ENCODE measurements at regions of chr7 and their contacts with region 1.

Region 1: GRCh38 chr7:100101016-100101862 is at the starts of genes AP4M1 and MCM7:
- DNase-seq: peak; percentile 99
- ATAC-seq: peak; percentile 88
- H3K4me3 Mint-ChIP-seq: peak within 1 kb of the TSS; percentile 90
- H3K27ac Mint-ChIP-seq: peak within 1 kb of the TSS; percentile 93
- H3K4me1 Mint-ChIP-seq: peaks cover 43% of the 10 kb centered on the region
- H3K27me3 Mint-ChIP-seq: no peaks in the 10 kb centered on the region
- total RNA-seq, gene AP4M1: 9.9 to 10.6 TPM
- total RNA-seq, gene MCM7: 405 to 409 TPM

Region 2: GRCh38 chr7:100081535-100082102 is 19.6 kb before region 1 on chr7 and contains the start of gene ZNF3:
- CTCF ChIA-PET with region 1: interaction called, 14 read pairs
- DNase-seq: peak; percentile 99
- ATAC-seq: peak; percentile 91
- H3K4me3 Mint-ChIP-seq: peak within 1 kb of the TSS; percentile 88
- H3K27ac Mint-ChIP-seq: peak within 1 kb of the TSS; percentile 87
- H3K4me1 Mint-ChIP-seq: peaks cover 32% of the 10 kb centered on the region
- H3K27me3 Mint-ChIP-seq: no peaks in the 10 kb centered on the region
- total RNA-seq, gene ZNF3: 21.2 to 24.1 TPM

Region 3: GRCh38 chr7:100088621-100089457 is 12.4 kb before region 1 on chr7 and contains the start of gene COPS6:
- CTCF ChIA-PET with region 1: interaction called, 18 read pairs
- DNase-seq: peak; percentile 85
- ATAC-seq: peak; percentile 78
- H3K4me3 Mint-ChIP-seq: peak within 1 kb of the TSS; percentile 86
- H3K27ac Mint-ChIP-seq: peak within 1 kb of the TSS; percentile 88
- H3K4me1 Mint-ChIP-seq: peaks cover 47% of the 10 kb centered on the region
- H3K27me3 Mint-ChIP-seq: no peaks in the 10 kb centered on the region
- total RNA-seq, gene COPS6: 81.2 to 90.8 TPM

Region 4: GRCh38 chr7:100126931-100127865 is 26.0 kb after region 1 on chr7 and contains the start of gene MBLAC1:
- CTCF ChIA-PET with region 1: interaction called, 60 read pairs
- DNase-seq: peak; percentile 94
- ATAC-seq: peak; percentile 79
- H3K4me3 Mint-ChIP-seq: peak within 1 kb of the TSS; percentile 89
- H3K27ac Mint-ChIP-seq: peak within 1 kb of the TSS; percentile 98
- H3K4me1 Mint-ChIP-seq: peaks cover 41% of the 10 kb centered on the region
- H3K27me3 Mint-ChIP-seq: no peaks in the 10 kb centered on the region
- total RNA-seq, gene MBLAC1: 5.6 to 7.5 TPM

Measured in activated CD8-positive, alpha-beta memory T cell treated with anti-CD3 and anti-CD28 coated beads, Interleukin-2, amount 10 ng/mL, durations not matched to agents 7 days and 5 days (primary cell).